Left ventricle myocardium inferior (tissue), 1 donor: ENCODE measurements at regions of chr19 and their contacts with region 1.

Region 1: GRCh38 chr19:29715701-29716581 is 880 bp upstream of the C19orf12 start:
- DNase-seq: no peak
- H3K4me3 ChIP-seq: peak overlapping the region; percentile 92
- H3K27ac ChIP-seq: peak overlapping the region; percentile 91
- H3K4me1 ChIP-seq: peaks cover 56% of the 10 kb centered on the region
- H3K27me3 ChIP-seq: no peaks in the 10 kb centered on the region
- CTCF ChIP-seq: no peak

Region 2: GRCh38 chr19:29610563-29611271 is 105.2 kb before region 1 on chr19:
- intact Hi-C with region 1: loop called (anchors 2 kb)
- DNase-seq: peak; percentile 77
- H3K4me3 ChIP-seq: no peak overlapping the region
- H3K27ac ChIP-seq: no peak overlapping the region
- H3K4me1 ChIP-seq: peaks cover 24% of the 10 kb centered on the region
- H3K27me3 ChIP-seq: no peaks in the 10 kb centered on the region
- CTCF ChIP-seq: peak; percentile 91

Region 3: GRCh38 chr19:29665215-29665825 is 50.6 kb before region 1 on chr19 and contains the start of gene PLEKHF1:
- intact Hi-C with region 1: no loop called
- DNase-seq: peak; percentile 94
- H3K4me3 ChIP-seq: peak within 1 kb of the TSS; percentile 98
- H3K27ac ChIP-seq: peak within 1 kb of the TSS; percentile 98
- H3K4me1 ChIP-seq: peaks cover 90% of the 10 kb centered on the region
- H3K27me3 ChIP-seq: no peaks in the 10 kb centered on the region
- CTCF ChIP-seq: no peak
- total RNA-seq, gene PLEKHF1: 27.8 TPM

Region 4: GRCh38 chr19:29858000-29858596 is 142.2 kb after region 1 on chr19:
- intact Hi-C with region 1: no loop called
- DNase-seq: no peak
- H3K4me3 ChIP-seq: no peak overlapping the region
- H3K27ac ChIP-seq: no peak overlapping the region
- H3K4me1 ChIP-seq: no peaks in the 10 kb centered on the region
- H3K27me3 ChIP-seq: peaks cover 89% of the 10 kb centered on the region
- CTCF ChIP-seq: peak; percentile 69